Left colon (tissue), 2 donors: ENCODE measurements at regions of chr12 and their contacts with region 1.

Region 1: GRCh38 chr12:50637870-50638481 is 125.9 kb upstream of the ATF1 start:
- DNase-seq: no peak
- ATAC-seq: peak; percentile 53

Region 2: GRCh38 chr12:50504798-50505385 is 133.1 kb before region 1 on chr12 and contains the start of gene DIP2B:
- intact Hi-C with region 1: loop called (anchors 2 to 5 kb)
- DNase-seq: peak; percentile 93 to 98
- ATAC-seq: peak; percentile 91
- total RNA-seq, gene DIP2B: 33.5 to 37.7 TPM